ENCODE measurements at regions of chr11 and their contacts with region 1.

Region 1: GRCh38 chr11:12100841-12101242 is 9.5 kb upstream of the MICAL2 start:
- DNase-seq: no peak
- H3K4me3 ChIP-seq: no peak overlapping the region
- H3K27ac ChIP-seq: no peak overlapping the region
- H3K4me1 ChIP-seq: no peaks in the 10 kb centered on the region
- H3K27me3 ChIP-seq: no peaks in the 10 kb centered on the region
- CTCF ChIP-seq: no peak
- POLR2A ChIP-seq: no peak

Region 2: DNA sequence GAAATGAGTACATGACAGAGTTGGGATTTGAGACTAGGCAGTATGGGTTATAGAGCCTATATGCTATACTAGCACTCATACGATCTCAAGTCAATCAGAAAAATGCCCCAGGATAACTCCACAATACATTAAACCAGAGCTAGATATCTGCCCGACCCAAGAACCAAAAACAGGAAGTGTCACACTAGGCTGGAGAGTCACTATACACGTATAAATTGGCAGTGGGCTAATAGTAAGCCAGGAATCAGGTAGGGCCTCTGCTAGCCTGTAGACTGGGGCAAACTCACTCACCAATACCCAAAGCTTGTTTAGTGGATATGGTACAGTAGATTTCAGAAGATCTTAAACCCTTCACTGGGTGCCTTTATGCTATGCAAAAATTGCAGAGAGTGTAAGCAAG is 1276.0 kb before region 1 on chr11:
- intact Hi-C with region 1: no loop called
- DNase-seq: no peak
- H3K4me3 ChIP-seq: no peak overlapping the region
- H3K27ac ChIP-seq: no peak overlapping the region
- H3K4me1 ChIP-seq: no peaks in the 10 kb centered on the region
- H3K27me3 ChIP-seq: no peaks in the 10 kb centered on the region
- CTCF ChIP-seq: no peak
- POLR2A ChIP-seq: no peak

Region 3: DNA sequence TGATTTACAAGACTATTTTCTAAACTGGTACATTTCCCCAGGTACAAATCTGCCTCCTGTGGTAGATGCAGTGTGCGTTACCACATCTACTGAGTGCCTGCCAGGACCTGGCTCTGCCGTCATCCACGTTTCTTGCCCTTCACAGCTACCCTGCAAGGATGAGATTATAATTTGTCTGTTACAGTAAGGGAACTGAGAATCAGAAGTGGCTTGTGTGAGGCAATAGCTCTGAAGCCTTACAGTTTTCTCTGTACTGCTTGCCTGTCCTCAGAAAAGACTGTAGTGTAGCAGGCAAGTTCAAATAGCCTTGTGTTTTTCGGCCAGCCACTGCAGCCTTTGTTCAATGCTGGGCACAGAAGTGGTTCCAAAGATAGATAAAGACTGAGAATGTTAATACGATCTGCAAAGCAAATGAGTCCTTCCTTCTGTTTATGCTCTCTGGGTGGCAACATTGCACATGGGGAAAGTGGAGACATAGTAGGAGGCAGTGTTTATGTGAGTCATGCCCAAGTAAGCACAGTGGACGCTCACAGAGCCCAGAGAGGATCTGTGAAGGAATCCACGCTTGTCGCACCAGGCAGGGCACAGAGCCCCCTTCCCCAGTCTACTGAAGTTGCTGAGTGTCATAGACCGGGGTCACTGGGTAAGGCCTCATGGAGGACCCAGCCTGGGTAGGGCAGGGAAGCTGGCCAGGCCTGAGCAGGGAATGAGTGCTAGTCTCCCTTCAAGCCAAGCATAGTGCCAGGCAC is 58.7 kb after region 1 on chr11:
- intact Hi-C with region 1: no loop called
- DNase-seq: peak in 1 of 2 donors; percentile 84
- H3K4me3 ChIP-seq: no peak overlapping the region
- H3K27ac ChIP-seq: peak overlapping the region; percentile 74
- H3K4me1 ChIP-seq: peaks cover 26% of the 10 kb centered on the region
- H3K27me3 ChIP-seq: no peaks in the 10 kb centered on the region
- CTCF ChIP-seq: no peak
- POLR2A ChIP-seq: no peak

Region 4: GRCh38 chr11:12235947-12236743 is 135.3 kb after region 1 on chr11:
- intact Hi-C with region 1: loop called (anchors 10 kb)
- DNase-seq: no peak
- H3K4me3 ChIP-seq: no peak overlapping the region
- H3K27ac ChIP-seq: peak overlapping the region; percentile 19
- H3K4me1 ChIP-seq: peaks cover 9% of the 10 kb centered on the region
- H3K27me3 ChIP-seq: no peaks in the 10 kb centered on the region
- CTCF ChIP-seq: peak; percentile 20 to 66 (median 61)
- POLR2A ChIP-seq: no peak